Cardiac septum (tissue), 1 donor: ENCODE measurements at regions of chr5 and their contacts with region 1.

Region 1: DNA sequence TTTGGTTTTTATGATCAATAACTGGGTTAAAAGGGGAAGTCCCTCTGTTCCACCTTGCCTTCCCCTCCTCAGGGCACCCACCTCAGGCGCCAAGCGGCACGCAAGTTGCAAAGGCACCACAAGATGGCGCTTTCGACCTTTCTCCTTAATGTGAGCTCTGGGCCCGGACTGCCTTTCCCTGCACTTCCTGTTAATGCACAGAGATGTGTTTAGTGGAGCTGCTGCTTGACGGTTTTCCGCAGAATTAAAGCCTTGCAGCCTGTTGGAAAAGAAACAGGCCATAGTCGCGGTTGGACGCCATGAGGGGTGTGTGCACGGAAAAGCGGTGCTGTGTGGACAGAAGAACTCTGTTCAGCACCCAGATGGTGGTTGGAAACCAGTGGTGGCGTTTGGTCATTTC is 17.9 kb downstream of the CXCL14 start:
- DNase-seq: no peak

Region 2: DNA sequence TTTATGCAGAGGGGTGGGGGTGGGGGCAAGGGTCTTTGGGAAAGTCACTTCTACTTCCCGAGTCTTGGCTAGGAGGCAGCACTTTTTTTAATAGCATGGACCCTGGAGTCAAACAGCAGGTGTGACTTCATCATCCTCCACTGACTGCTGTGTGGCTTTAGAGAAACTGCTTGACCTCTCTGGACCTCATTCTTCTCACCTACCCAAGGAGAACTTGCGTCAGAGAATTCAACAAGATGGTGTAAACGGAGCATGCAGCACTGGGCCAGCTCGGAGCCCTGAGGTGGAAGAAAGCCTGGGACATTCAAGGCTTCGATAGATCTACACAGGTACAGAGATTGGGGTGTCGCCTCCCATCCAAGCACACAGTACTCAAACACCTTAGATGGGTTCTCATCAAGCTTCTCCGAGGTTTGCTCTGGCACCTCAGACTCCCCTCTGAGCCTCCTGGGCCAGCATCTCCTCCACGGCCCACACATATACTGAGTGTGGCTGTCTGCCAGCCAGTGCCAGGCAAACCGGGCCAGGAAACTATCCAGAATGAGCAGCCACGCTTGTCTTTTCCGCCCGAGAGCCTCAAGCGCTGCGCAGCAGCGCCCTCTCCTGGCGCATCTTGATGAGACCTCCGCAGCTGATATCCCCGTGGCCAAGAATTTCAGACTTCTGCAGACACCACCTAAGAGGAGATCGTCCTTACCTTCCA is 269.0 kb after region 1 on chr5:
- intact Hi-C with region 1: loop called (anchors 1 kb)
- DNase-seq: no peak

Region 3: GRCh38 chr5:136212252-136212721 is 651.4 kb after region 1 on chr5:
- intact Hi-C with region 1: loop called (anchors 5 kb)
- DNase-seq: no peak